ENCODE measurements at regions of chr1 and their contacts with region 1.

Region 1: DNA sequence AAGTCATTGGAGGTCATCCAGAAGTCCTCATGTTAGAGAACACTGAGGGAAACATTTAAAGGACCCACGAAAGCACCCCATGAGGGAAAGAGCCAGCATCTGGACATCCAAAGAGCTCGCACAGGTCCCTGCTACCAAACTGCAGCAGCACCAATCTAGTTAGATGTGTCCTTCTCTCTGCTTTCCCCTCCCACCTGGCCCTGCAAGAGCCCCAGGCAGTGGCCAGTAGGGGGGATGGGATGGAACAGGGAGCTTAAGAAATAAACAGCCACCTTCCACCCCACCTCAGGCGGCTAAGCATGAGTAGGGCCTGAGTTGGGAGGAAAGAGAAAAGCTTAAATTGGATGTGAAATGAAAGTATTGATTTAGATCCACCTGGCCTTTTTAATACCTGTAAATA is 175.9 kb upstream of the KCND3 start:
- DNase-seq: no peak
- H3K4me3 Mint-ChIP-seq: no peak overlapping the region
- H3K27ac Mint-ChIP-seq: no peak overlapping the region
- H3K4me1 Mint-ChIP-seq: no peaks in the 10 kb centered on the region
- H3K27me3 Mint-ChIP-seq: peaks cover 11% of the 10 kb centered on the region

Region 2: GRCh38 chr1:112105557-112105956 is 59.8 kb before region 1 on chr1:
- CTCF ChIA-PET with region 1: no interaction called
- intact Hi-C with region 1: no loop called
- DNase-seq: no peak
- H3K4me3 Mint-ChIP-seq: no peak overlapping the region
- H3K27ac Mint-ChIP-seq: no peak overlapping the region
- H3K4me1 Mint-ChIP-seq: no peaks in the 10 kb centered on the region
- H3K27me3 Mint-ChIP-seq: peaks cover 17% of the 10 kb centered on the region

Region 3: GRCh38 chr1:112144733-112145426 is 20.5 kb before region 1 on chr1:
- CTCF ChIA-PET with region 1: no interaction called
- intact Hi-C with region 1: loop called (anchors 1 kb)
- DNase-seq: no peak
- H3K4me3 Mint-ChIP-seq: no peak overlapping the region
- H3K27ac Mint-ChIP-seq: no peak overlapping the region
- H3K4me1 Mint-ChIP-seq: no peaks in the 10 kb centered on the region
- H3K27me3 Mint-ChIP-seq: peaks cover 9% of the 10 kb centered on the region

Measured in activated naive CD4-positive, alpha-beta T cell treated with anti-CD3 and anti-CD28 coated beads for 36 hours (primary cell).